Cardiac septum (tissue), 1 donor: ENCODE measurements at regions of chr11 and their contacts with region 1.

Region 1: GRCh38 chr11:128506999-128507611 is 80.3 kb downstream of the ETS1 start:
- DNase-seq: no peak

Region 2: DNA sequence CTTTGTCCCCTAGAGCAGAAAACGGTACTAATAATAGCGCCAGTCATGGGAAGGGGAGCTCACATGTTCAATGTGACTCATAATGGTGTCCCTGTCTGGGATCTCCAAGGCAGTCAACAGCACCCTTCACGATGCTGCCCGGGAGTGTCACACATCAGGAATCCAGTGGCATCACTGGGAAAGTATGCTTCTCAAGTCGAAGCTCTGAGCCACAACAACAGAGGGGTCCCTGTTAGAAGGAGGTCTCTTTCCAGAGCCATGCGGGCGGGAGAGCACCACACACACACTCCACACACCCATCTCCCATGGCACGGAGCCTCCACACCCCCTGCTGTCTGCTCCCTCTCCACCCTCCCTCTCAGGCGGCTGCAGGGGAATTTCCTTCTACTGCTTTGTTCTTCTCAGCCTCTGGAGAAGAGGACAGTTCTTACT is 39.5 kb before region 1 on chr11:
- intact Hi-C with region 1: loop called (anchors 5 kb)
- DNase-seq: no peak